ENCODE measurements at regions of chr14 and their contacts with region 1.

Region 1: DNA sequence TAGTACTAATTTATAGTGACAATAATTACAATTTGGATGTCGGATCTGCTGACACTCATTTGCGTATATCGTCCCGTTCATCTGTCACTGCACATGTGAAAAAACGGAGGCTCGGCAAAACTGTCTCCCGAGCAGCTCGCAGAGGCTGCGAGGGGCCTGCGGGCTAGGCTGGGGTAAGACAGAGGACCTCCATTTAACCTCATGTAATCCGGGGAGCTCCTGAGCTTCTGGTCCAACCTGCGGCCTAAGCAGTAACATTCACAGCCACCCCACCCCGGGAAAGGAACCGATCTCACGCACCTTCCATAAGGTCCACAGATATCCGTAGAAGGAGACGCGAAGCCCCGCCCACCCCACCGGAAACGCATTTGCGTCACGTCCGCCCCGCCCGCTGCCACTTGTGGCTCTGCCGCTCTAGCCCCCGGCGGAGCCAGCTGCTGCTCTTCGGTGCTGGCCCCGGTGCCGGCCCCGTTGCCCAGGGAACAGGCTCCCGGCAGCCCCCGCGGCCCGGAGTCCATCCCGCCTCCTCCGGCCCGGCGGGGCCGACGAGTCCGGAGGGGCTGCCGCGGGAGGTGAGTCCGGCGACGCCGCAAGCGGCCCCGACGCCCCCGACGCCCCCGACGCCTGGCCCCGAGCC is at the starts of genes CINP and TECPR2:
- DNase-seq: peak; percentile 99
- H3K4me3 ChIP-seq: peak within 1 kb of the TSS; percentile 85 to 99 (median 94)
- H3K27ac ChIP-seq: peak within 1 kb of the TSS; percentile 93 to 98 (median 97)
- H3K4me1 ChIP-seq: peaks cover 17 to 22% (median 20%) of the 10 kb centered on the region in 4 donors
- H3K27me3 ChIP-seq: no peaks in the 10 kb centered on the region
- CTCF ChIP-seq: no peak
- EP300 ChIP-seq: no peak
- POLR2A ChIP-seq: peak; percentile 80
- total RNA-seq, gene CINP: 10.5 to 32.0 (median 19.0) TPM
- total RNA-seq, gene TECPR2: 12.6 to 47.4 (median 17.9) TPM

Region 2: DNA sequence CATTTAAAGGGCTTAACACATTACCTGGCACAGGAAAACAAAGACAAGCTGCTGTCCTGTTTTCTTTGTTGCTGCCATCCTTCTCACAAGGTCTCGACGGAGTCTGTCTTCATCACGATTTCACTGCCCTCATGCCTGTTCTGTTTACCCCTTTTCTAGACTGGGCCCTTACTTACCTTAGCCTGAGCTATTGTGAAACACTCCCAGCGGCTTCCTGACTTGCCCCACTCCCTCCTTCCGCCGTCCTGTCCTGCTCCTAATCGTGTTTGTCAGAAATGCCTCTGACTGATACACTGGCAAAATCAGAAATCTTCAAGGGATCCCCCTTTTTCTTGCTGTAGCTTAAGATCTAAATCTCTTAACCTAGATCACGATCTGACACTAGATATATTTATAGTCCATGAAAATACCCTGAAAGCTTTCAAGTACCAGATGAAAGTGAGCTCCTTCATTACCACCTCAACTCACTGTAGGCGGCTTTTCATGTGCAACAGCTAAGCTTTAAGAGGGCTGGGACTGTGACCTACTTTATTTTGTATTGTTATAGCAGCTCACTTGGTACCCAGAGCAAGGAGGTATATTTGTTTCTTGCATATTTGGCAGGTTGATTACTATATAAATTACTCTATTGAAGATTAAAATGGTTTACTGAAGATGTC is 32.2 kb after region 1 on chr14:
- in situ Hi-C with region 1: no loop called
- intact Hi-C with region 1: no loop called
- DNase-seq: no peak
- H3K4me3 ChIP-seq: no peak overlapping the region
- H3K27ac ChIP-seq: no peak overlapping the region
- H3K4me1 ChIP-seq: peaks cover 3 to 17% (median 9%) of the 10 kb centered on the region in 4 donors
- H3K27me3 ChIP-seq: no peaks in the 10 kb centered on the region
- CTCF ChIP-seq: no peak
- EP300 ChIP-seq: no peak
- POLR2A ChIP-seq: no peak

Region 3: GRCh38 chr14:102524466-102525218 is 162.0 kb after region 1 on chr14:
- in situ Hi-C with region 1: loop called in 1 of 4 experiments (anchors 25 kb)
- intact Hi-C with region 1: no loop called
- DNase-seq: peak; percentile 100
- H3K4me3 ChIP-seq: peak overlapping the region; percentile 35 to 63 (median 42)
- H3K27ac ChIP-seq: peak overlapping the region; percentile 87 to 94 (median 89)
- H3K4me1 ChIP-seq: peaks cover 17 to 33% (median 29%) of the 10 kb centered on the region in 4 donors
- H3K27me3 ChIP-seq: no peaks in the 10 kb centered on the region
- CTCF ChIP-seq: peak; percentile 98 to 100 (median 100)
- EP300 ChIP-seq: no peak
- POLR2A ChIP-seq: peak; percentile 90

Region 4: DNA sequence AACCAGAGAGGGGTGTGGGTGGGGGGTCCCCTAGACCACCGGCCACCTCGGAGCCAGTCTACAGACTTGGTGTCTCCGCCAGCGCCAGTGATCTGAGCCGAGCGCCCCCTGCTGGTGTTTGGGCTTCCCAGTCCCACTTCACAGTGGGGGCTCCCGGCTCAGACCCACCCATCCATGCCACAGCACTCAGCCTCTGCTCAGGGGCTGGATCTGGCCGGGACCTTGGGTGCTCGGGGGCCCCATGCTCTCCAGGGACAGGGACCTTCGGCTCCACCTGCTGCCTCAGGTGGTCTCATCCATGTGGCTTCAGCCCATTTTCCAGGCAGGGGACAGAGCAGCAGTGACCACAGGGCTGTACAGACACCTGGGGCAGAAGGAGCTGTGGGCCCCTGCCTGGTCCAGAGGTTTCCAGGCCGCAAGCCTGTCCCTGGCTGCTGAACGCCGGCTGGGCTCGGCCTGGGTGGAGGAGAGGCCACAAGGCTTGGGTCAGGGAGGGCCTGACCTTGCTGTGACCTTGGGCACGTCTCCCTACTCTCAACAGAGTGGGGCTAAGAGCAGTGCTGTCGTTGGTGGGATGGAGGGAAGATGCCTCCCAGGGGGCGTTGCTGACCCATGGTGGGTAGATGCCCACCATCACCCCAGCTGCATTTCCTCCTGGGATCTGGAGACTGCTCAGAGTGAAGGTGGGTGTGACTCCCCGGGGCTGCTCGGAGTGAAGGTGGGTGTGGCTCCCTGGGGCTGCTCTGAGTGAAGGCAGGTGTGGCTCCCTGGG is 1862.0 kb after region 1 on chr14:
- in situ Hi-C with region 1: no loop called
- intact Hi-C with region 1: loop called (anchors 5 kb)
- DNase-seq: peak; percentile 60
- H3K4me3 ChIP-seq: peak overlapping the region in 2 of 4 donors; percentile 23 to 41
- H3K27ac ChIP-seq: peak overlapping the region; percentile 74 to 97 (median 85)
- H3K4me1 ChIP-seq: peaks cover 3 to 44% (median 33%) of the 10 kb centered on the region in 4 donors
- H3K27me3 ChIP-seq: no peaks in the 10 kb centered on the region
- CTCF ChIP-seq: peak in 4 of 5 experiments; percentile 26 to 82 (median 52)
- EP300 ChIP-seq: no peak
- POLR2A ChIP-seq: peak; percentile 44